Mucosa of descending colon (tissue), 3 donors: ENCODE measurements at regions of chr11 and their contacts with region 1.

Region 1: DNA sequence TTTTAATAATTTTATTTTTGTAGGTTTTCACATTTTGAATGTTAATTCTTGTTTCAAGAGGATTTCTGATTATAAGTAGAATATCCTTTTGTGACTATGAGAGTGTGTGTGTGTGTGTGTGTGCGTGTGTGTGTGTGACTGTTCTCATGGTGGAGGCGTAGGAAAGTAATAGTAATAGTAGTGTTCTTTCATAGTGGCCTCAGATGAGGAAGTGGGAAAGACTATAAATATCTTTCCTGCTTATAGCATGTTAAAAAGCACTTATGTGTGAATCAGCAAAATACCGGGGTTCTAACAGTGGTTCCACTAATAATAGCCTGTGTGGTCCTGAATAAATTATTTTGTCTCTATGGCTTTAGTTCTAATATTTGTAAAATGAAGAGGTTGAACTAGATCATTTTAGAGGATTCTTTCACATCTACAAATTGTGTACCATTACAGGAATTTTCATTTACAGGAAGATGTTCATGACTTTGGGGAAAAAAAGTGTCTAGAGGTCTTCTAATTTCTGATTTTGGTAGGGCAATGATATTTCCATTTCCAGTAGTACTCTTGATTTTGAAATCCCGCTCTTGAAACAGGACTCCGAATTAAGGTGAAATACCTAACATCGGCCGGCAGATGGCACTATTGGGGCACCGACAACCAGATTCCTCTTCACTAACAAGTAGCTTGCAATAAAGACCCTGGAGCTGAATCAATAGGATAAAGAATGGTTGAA is 29.9 kb upstream of the OR10G7 start:
- DNase-seq: peak in 2 of 3 donors; percentile 53 to 74
- ATAC-seq: peak; percentile 42
- H3K4me3 ChIP-seq: no peak overlapping the region
- H3K4me1 ChIP-seq: peaks cover 4% of the 10 kb centered on the region
- CTCF ChIP-seq: no peak

Region 2: DNA sequence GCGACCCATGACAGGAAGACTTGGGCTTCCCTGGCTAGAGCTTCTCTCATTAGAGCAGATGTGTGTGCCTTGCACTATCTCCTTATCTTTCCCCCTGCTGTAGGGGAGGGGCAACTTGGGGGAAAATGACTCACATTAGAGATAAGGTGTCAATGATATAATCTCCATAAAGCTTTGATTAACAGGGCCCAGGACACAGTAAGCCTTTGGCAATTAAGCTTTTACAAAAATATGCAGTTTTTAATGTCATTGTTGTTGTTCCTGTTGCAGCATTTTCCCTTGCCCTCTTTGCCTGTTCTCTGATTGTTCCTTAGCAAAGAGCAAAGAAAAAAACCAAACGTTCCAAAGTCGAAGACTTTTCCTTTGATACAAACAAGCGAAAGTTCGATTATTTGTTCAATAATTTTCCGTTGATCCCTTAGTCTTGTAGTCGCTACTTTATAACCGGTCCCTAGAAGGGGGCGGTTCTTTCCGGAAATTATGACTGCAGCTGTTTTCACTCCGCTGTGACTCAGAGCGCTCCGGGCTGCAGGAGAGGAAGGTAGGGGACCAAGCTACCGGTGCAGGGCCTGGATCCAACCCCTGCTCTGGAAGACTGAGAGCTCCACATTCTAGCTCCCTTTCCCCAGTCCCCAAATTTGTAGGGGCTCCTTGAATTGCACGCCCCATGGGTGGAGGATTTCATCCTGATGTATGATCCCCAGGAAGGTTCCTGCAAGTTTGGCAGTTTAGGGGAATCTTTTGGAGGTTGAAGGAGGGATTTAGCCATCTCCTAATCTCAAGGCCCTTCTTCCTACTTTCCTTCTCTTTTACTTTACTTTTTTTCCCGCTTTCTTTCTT is 44.1 kb after region 1 on chr11 and contains the start of gene VWA5A:
- intact Hi-C with region 1: no loop called
- DNase-seq: peak; percentile 86 to 96 (median 89)
- ATAC-seq: peak; percentile 96
- H3K4me3 ChIP-seq: peak within 1 kb of the TSS; percentile 5
- H3K4me1 ChIP-seq: peaks cover 12% of the 10 kb centered on the region
- CTCF ChIP-seq: no peak
- total RNA-seq, gene VWA5A: 41.2 to 97.3 (median 55.8) TPM

Region 3: GRCh38 chr11:124194698-124195410 is 123.8 kb after region 1 on chr11:
- intact Hi-C with region 1: loop called in 1 of 2 experiments (anchors 5 kb)
- DNase-seq: peak in 2 of 3 donors; percentile 20 to 82
- ATAC-seq: peak; percentile 94
- H3K4me3 ChIP-seq: no peak overlapping the region
- H3K4me1 ChIP-seq: no peaks in the 10 kb centered on the region
- CTCF ChIP-seq: peak; percentile 69